PC-3 (cell line): ENCODE measurements at regions of chr13 and their contacts with region 1.

Region 1: DNA sequence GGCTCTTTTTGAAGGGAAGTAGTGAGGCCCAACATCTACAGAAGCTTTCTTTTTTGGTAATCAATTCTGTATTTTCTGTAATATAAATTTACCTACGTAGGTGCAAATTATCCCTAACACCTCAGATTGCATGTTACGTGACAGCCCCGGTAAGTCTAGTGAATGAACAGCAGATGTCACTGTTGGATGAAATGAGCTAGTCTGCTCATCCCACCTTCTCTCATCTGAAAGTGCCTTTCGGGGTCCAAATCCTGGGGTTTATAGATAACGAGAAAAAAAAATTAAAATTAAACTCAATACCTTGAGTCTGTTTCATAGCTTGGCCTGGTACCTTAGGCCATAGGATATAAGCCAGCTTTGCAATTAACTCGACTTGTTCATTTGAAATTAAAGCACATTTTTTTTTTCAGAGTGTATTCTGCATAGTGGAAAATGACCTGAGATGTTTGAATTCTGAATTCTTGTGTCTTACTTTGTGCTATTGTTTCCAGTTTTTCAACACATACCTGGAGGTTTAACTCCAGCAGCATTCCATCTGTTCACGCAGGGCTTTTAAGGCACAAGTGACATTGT is 548.2 kb downstream of the GPC5 start:
- DNase-seq: peak; percentile 23
- ATAC-seq: peak; percentile 53; the same call in 1 of the 2 replicates
- H3K4me3 ChIP-seq: no peak overlapping the region
- H3K27ac ChIP-seq: no peak overlapping the region
- H3K4me1 ChIP-seq: no peaks in the 10 kb centered on the region
- H3K27me3 ChIP-seq: no peaks in the 10 kb centered on the region
- CTCF ChIP-seq: peak; percentile 57

Region 2: DNA sequence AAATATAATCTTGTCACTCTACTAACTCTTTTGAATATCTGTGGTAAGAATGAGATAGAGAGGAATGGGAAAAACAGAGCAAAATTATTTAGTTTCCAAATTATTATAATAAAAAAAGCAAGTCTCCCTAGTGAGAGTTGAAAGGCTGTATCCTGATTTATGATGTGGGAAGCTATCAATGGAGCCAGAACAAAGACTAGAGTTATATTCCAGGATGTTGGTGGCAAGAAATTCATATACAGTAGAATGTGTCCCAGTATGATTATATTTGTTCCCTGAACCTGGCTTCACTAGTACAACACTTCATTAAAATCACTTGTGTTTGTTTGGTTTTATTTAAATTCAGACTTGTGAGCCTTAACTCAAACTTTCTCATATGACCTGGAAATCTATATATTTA is 82.1 kb after region 1 on chr13:
- CTCF ChIA-PET with region 1: no interaction called
- POLR2A ChIA-PET with region 1: no interaction called
- intact Hi-C with region 1: no loop called
- DNase-seq: no peak
- ATAC-seq: no peak
- H3K4me3 ChIP-seq: no peak overlapping the region
- H3K27ac ChIP-seq: no peak overlapping the region
- H3K4me1 ChIP-seq: no peaks in the 10 kb centered on the region
- H3K27me3 ChIP-seq: no peaks in the 10 kb centered on the region
- CTCF ChIP-seq: no peak

Region 3: GRCh38 chr13:92074658-92075057 is 128.1 kb after region 1 on chr13:
- CTCF ChIA-PET with region 1: interaction called, 3 read pairs
- POLR2A ChIA-PET with region 1: no interaction called
- intact Hi-C with region 1: loop called (anchors 1 kb)
- DNase-seq: peak; percentile 7
- ATAC-seq: peak; percentile 67
- H3K4me3 ChIP-seq: no peak overlapping the region
- H3K27ac ChIP-seq: no peak overlapping the region
- H3K4me1 ChIP-seq: no peaks in the 10 kb centered on the region
- H3K27me3 ChIP-seq: no peaks in the 10 kb centered on the region
- CTCF ChIP-seq: peak; percentile 51; the same call in 1 of the 2 replicates

Region 4: DNA sequence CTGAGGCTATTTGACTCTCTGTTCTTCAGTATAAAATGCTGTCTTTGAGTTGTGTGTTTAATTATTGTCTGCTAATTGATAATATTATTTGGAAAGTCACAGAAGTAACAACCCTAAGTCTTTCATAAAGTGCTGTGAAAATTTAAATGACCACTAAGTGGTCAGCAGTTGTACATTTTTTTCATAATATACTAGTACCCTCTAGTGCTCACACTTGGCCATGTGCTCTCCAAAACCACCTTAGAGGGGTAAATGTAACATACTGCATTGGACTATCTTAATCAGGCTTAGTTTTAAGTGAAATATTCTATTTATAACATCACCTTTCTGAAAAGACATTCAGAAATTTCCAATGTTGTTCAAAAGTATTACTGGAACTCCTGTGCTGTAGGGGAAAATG is 197.2 kb after region 1 on chr13:
- CTCF ChIA-PET with region 1: no interaction called
- POLR2A ChIA-PET with region 1: no interaction called
- intact Hi-C with region 1: loop called (anchors 1 kb)
- DNase-seq: no peak
- ATAC-seq: peak; percentile 71
- H3K4me3 ChIP-seq: no peak overlapping the region
- H3K27ac ChIP-seq: no peak overlapping the region
- H3K4me1 ChIP-seq: no peaks in the 10 kb centered on the region
- H3K27me3 ChIP-seq: no peaks in the 10 kb centered on the region
- CTCF ChIP-seq: no peak